BJ (cell line): ENCODE measurements at regions of chr4 and their contacts with region 1.

Region 1: GRCh38 chr4:129093191-129093920 is at the start of gene SCLT1:
- DNase-seq: peak; percentile 86
- H3K4me3 ChIP-seq: peak within 1 kb of the TSS; percentile 61
- H3K27me3 ChIP-seq: no peaks in the 10 kb centered on the region
- CTCF ChIP-seq: no peak
- polyA plus RNA-seq, gene SCLT1: 3.1 and 5.1 TPM in 2 replicates

Region 2: DNA sequence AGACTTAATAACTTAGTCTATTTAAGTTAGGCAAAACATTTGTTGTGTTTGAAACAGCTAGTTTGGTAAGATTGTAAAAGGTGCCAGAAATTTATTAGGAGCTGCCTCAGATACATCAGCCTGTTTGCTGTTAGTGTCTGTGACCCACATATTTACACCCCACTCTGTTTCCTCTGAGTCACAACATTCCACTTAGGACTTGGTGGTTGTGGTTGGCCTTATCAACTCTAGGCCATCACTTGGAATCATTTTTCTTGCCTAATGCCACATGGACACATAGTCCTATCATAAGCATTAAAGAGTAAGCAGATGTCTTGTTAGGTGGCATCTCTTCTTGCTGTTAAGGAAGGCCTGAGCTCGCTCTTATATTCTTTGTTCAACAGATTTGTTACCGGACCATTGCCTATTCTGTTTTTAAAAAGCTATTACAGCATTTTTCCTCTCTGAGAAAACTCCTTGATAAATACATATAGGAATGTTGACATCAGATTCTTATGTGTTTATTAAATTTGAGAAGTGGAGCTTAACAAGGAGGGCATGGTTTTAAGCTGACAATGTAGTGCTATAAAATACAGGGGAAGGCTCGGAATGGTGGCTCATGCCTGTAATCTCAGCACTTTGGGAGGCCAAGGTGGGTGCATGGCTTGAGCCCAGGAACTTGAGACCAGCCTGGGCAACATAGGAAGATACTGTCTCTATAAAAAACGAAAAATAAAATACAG is 754.6 kb before region 1 on chr4:
- CTCF ChIA-PET with region 1: no interaction called
- POLR2A ChIA-PET with region 1: interaction called, 24 read pairs
- DNase-seq: peak; percentile 87
- H3K4me3 ChIP-seq: no peak overlapping the region
- H3K27me3 ChIP-seq: no peaks in the 10 kb centered on the region
- CTCF ChIP-seq: no peak